CD4-positive, alpha-beta memory T cell (primary cell): ENCODE measurements at regions of chr7 and their contacts with region 1.

Region 1: DNA sequence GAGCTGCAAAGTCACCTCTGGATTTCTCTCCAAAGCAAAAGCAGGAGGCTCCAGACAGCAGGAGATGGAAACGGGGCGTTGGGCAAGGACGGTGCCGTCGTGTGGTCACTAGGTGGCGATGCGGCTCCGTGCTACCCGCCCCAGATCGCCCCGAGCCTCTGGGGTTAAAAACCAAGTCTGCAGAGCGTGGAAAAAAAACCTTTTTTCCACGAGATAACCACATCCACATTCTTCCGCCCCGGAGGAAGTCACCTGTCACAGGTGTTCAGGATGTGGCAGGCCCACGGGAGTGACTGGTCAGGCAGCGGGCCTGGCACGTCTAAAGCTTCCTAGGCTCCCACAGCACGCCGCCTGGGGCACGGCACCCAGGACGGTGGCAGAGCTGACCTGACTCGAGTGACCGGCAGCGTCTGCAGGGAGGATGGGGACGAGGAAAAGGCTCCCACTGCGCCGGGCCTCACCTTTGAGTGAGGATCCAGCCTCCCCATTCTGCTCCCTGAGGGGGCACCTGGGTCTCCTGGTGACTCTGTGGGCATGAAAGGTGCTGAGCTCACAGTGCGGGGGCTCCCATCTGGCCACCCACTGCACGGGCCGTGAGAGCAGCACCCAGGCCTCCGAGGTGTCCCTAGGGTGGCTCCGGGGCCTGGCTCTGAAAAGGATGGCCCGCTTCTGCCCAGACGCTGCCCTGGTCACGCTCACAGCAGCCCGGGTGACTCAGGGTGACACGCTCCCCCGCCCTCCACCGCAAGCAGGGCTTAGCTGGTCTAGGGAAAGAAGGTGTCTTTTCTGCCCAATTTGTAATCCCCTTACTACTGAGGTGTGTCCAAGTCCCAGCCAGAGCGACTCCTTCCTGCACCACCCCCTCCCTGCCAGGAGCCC is 71.3 kb upstream of the TNRC18 start:
- DNase-seq: peak; percentile 80 to 82 (median 81)
- H3K4me3 ChIP-seq: peak overlapping the region in 1 of 2 donors; percentile 40
- H3K4me3 Mint-ChIP-seq: peak overlapping the region in 7 of 8 donors; percentile 46 to 73 (median 53)
- H3K27ac ChIP-seq: no peak overlapping the region
- H3K27ac Mint-ChIP-seq: peak overlapping the region in 5 of 7 donors; percentile 15 to 86 (median 63)
- H3K4me1 ChIP-seq: peaks cover 16% of the 10 kb centered on the region
- H3K4me1 Mint-ChIP-seq: peaks cover 5 to 27% (median 15%) of the 10 kb centered on the region in 4 donors
- H3K27me3 ChIP-seq: no peaks in the 10 kb centered on the region
- H3K27me3 Mint-ChIP-seq: no peaks in the 10 kb centered on the region

Region 2: DNA sequence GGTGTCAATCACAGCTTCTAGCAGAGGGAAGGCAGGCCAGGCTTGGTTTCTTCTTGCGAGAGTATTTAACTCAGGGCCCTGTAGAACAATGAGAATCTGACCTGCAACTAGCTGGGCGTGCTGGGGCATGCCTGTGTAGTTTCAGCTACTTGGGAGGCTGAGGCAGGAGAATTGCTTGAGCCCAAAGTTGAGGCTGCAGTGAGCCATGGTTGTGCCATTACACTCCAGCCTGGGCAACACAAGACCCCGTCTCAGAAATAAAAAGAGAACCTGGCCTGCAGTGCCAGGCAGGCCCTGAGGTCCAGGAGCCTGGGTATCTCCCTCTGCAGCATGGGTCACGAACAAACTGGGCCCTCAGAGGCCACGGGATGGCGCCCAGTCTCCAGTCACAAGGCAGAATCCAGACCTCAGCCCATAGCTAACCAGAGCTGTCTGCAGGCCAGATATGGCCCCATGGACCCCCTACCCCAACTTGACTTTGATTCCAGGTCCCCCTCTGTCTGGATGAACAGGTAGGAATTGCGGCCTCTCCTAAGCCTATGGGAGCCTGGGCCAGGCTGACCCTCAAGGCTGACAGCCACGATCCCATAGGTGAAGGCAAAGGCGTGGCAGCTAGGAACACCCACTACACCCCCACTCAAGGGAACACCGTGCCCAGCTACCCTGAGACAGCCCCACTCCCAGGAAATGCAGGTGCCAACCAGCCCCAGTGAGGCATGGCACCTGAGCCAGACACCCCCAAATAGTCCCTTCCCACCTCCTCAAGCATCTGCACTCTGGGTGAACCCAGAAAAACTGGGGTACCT is 31.4 kb after region 1 on chr7:
- CTCF ChIA-PET with region 1: interaction called, 8 read pairs
- POLR2A ChIA-PET with region 1: interaction called, 14 read pairs
- intact Hi-C with region 1: no loop called
- DNase-seq: peak in 3 of 5 donors; percentile 33 to 44 (median 43)
- H3K4me3 ChIP-seq: no peak overlapping the region
- H3K4me3 Mint-ChIP-seq: peak overlapping the region; percentile 91 to 99 (median 98)
- H3K27ac ChIP-seq: peak overlapping the region; percentile 69
- H3K27ac Mint-ChIP-seq: peak overlapping the region; percentile 93 to 99 (median 98)
- H3K4me1 ChIP-seq: peaks cover 23% of the 10 kb centered on the region
- H3K4me1 Mint-ChIP-seq: peaks cover 19 to 54% (median 35%) of the 10 kb centered on the region in 4 donors
- H3K27me3 ChIP-seq: no peaks in the 10 kb centered on the region
- H3K27me3 Mint-ChIP-seq: no peaks in the 10 kb centered on the region

Region 3: DNA sequence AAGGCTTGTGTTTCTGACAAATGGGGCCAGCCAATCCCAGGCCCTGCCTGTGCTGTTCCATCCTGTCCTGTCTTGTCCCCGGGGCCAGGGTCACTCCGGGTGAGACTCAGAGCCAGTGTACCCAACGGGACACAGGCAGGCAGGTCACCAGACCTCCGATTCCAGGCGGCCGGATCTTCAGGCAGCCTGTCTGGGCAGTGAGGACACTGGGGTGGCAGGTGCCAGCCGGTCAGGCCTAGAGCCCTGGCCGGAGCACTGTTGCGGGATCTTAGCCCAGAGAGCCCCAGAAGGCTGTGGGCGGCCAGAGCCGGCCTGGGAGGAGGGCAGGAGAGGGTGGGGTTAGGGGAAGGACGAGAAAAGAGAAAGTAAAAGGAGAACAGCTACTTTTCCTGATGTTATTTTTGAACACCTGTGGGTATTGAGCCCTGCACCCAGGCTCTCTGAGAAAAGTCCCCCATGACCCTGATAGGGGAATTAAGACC is 63.0 kb after region 1 on chr7:
- CTCF ChIA-PET with region 1: interaction called, 19 read pairs
- POLR2A ChIA-PET with region 1: interaction called, 6 read pairs
- intact Hi-C with region 1: loop called (anchors 1 kb)
- DNase-seq: no peak
- H3K4me3 ChIP-seq: peak overlapping the region in 1 of 2 donors; percentile 69
- H3K4me3 Mint-ChIP-seq: peak overlapping the region; percentile 61 to 97 (median 86)
- H3K27ac ChIP-seq: peak overlapping the region; percentile 64
- H3K27ac Mint-ChIP-seq: peak overlapping the region; percentile 82 to 97 (median 94)
- H3K4me1 ChIP-seq: peaks cover 52% of the 10 kb centered on the region
- H3K4me1 Mint-ChIP-seq: peaks cover 20 to 58% (median 40%) of the 10 kb centered on the region in 4 donors
- H3K27me3 ChIP-seq: peaks cover under 1% of the 10 kb centered on the region
- H3K27me3 Mint-ChIP-seq: peaks cover 2 to 5% of the 10 kb centered on the region in 2 donors

Region 4: DNA sequence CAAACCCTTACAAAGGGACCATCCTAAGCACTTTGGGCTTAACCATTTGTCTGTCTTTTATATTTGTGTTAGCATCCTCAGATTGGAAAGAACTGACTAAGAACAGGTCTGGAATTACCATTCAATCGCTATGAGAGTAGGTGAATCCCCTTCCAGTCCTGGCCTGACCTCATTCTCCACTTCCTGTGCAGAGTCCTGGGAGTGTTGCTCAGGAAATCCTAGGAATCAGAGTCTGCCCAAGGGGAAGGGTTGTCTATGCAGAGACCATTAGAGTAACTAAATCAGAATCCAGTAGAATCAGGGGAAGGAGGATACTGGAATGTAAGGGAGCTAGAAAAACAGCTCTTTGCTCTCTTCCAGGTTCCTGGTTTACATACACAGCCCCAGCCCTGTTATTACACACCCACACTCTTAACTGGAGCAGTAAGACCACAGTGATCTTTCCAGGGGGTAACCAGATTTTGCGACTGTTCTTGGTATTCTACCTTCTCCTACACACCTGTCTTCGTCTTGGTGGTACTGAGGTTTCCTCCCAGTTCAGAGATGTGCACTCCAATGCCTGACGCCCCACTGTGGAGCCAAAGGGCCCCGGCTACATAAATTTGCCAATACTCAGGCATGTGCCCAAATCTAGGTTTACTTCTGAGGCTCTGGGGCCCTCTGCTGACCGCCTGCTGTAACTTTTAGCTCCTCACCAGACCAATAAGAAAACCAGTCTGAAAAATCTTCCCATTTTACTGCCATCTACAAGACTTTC is 182.8 kb after region 1 on chr7:
- CTCF ChIA-PET with region 1: interaction called, 23 read pairs
- POLR2A ChIA-PET with region 1: interaction called, 3 read pairs
- intact Hi-C with region 1: no loop called
- DNase-seq: peak in 1 of 5 donors; percentile 43
- H3K4me3 ChIP-seq: no peak overlapping the region
- H3K4me3 Mint-ChIP-seq: peak overlapping the region in 1 of 8 donors; percentile 15
- H3K27ac ChIP-seq: no peak overlapping the region
- H3K27ac Mint-ChIP-seq: peak overlapping the region in 6 of 7 donors; percentile 25 to 77 (median 58)
- H3K4me1 ChIP-seq: peaks cover 42% of the 10 kb centered on the region
- H3K4me1 Mint-ChIP-seq: peaks cover 19 to 65% (median 45%) of the 10 kb centered on the region in 4 donors
- H3K27me3 ChIP-seq: no peaks in the 10 kb centered on the region
- H3K27me3 Mint-ChIP-seq: no peaks in the 10 kb centered on the region

Region 5: GRCh38 chr7:5694912-5695726 is 200.2 kb after region 1 on chr7:
- CTCF ChIA-PET with region 1: interaction called, 69 read pairs
- POLR2A ChIA-PET with region 1: interaction called, 12 read pairs
- intact Hi-C with region 1: no loop called
- DNase-seq: peak; percentile 76 to 89 (median 80)
- H3K4me3 ChIP-seq: peak overlapping the region; percentile 44 to 51
- H3K4me3 Mint-ChIP-seq: peak overlapping the region; percentile 90 to 98 (median 95)
- H3K27ac ChIP-seq: peak overlapping the region; percentile 64
- H3K27ac Mint-ChIP-seq: peak overlapping the region; percentile 88 to 98 (median 94)
- H3K4me1 ChIP-seq: peaks cover 100% of the 10 kb centered on the region
- H3K4me1 Mint-ChIP-seq: peaks cover 79 to 99% (median 90%) of the 10 kb centered on the region in 4 donors
- H3K27me3 ChIP-seq: no peaks in the 10 kb centered on the region
- H3K27me3 Mint-ChIP-seq: no peaks in the 10 kb centered on the region